Left cardiac atrium (tissue), 4 donors: ENCODE measurements at regions of chr17 and their contacts with region 1.

Region 1: DNA sequence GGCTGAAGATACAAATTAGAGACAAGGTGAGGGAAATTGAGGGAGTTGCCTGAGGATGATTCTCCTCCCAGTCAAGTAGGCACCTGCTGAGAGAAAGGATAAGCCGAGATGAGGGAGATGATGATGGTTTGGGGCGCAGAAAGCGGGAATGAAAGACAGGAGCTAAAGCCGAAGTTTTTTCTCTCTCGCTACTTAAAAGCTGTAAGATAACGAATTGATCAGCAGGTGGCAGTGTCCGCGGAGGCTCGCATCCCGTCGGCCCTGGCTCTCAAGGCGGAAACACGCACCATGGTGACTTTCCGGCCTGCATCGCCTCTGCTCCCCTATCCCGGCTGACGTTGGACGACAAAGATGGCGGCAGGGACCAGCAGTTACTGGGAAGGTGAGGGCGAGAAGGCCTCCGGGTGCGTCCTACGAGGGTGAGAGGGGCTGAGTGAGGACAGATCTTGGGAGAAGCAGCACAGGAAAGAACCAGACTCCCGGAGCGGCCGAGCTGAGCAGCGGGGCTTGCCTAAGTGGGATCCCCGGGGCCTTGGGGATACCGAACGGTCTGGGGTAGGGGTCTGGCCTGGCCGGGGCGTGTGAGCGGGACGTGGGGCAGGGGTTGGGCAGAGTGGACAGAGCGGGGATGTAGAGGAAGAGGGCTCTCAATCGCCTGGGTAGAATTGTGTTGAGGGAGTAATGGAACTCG is at the start of gene GOSR1:
- DNase-seq: peak; percentile 95
- ATAC-seq: peak; percentile 99 to 100
- total RNA-seq, gene GOSR1: 30.5 to 42.7 TPM

Region 2: GRCh38 chr17:30716461-30717300 is 239.5 kb after region 1 on chr17:
- intact Hi-C with region 1: loop called in 1 of 2 experiments (anchors 5 kb)
- DNase-seq: peak; percentile 12
- ATAC-seq: no peak